ENCODE measurements at regions of chr6 and their contacts with region 1.

Region 1: GRCh38 chr6:26270903-26271667 is 93.9 kb upstream of the BTN3A2 start:
- DNase-seq: peak; percentile 41 to 73 (median 72)
- ATAC-seq: peak; percentile 51 to 53
- H3K4me3 ChIP-seq: peak overlapping the region; percentile 29
- H3K27ac ChIP-seq: peak overlapping the region; percentile 52
- H3K4me1 ChIP-seq: peaks cover 4% of the 10 kb centered on the region
- H3K27me3 ChIP-seq: no peaks in the 10 kb centered on the region

Region 2: GRCh38 chr6:26216356-26216885 is 54.7 kb before region 1 on chr6:
- intact Hi-C with region 1: loop called in 1 of 4 experiments (anchors 10 kb)
- DNase-seq: peak; percentile 40 to 74 (median 71)
- ATAC-seq: peak; percentile 92 to 94
- H3K4me3 ChIP-seq: peak overlapping the region; percentile 63
- H3K27ac ChIP-seq: peak overlapping the region; percentile 100
- H3K4me1 ChIP-seq: peaks cover 2% of the 10 kb centered on the region
- H3K27me3 ChIP-seq: no peaks in the 10 kb centered on the region